ENCODE measurements at regions of chr17 and their contacts with region 1.

Region 1: DNA sequence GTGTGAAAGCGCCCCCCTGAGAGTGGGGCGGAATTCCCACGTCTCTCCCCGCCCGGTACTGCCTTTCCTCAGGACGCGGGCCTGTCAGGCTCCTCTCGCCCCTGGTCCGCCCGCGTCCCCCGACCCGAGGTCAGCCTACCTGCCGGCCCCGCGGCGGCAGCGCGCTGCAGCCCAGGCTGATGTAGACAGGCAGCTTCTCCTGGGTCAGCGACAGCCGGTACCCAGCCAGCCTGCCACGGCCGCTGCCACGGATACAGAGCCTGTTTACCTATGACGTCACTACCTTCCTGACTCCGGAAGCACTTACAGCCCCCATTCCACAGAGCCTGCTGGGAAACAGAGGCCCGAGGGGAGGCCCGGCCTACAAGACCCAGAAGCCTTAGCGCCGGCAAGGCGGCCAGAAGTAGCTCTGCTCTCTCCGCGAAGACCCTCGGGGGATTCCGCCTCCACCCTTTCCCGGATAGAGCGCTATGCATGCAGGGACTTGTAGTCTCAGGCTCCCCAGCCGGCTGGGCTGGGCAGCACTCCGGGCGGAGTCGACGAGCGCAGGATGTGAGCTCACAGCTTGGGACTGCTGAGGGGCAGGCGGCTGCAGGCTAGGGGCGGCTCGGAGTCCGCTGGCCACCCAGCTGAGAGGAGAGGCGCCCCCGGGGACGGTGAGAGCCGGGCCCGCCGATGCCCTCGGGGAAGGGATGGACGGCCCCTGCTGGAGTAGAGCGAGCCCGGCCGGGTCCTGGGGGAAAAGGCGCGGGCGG is at the starts of genes IFT20 and TNFAIP1:
- DNase-seq: peak; percentile 99
- H3K4me3 ChIP-seq: peak within 1 kb of the TSS; percentile 94
- H3K27me3 ChIP-seq: no peaks in the 10 kb centered on the region
- CTCF ChIP-seq: no peak
- polyA plus RNA-seq, gene IFT20: 39.1 and 53.2 TPM in 2 replicates
- polyA plus RNA-seq, gene TNFAIP1: 80.7 and 166 TPM in 2 replicates

Region 2: GRCh38 chr17:27805520-27806146 is 529.7 kb before region 1 on chr17:
- CTCF ChIA-PET with region 1: interaction called, 12 read pairs
- POLR2A ChIA-PET with region 1: no interaction called
- DNase-seq: peak; percentile 21
- H3K4me3 ChIP-seq: 0 out of 2 replicates have a peak overlapping the region, but pooled peaks have one; percentile 10
- H3K27me3 ChIP-seq: no peaks in the 10 kb centered on the region
- CTCF ChIP-seq: peak; percentile 84

Region 3: DNA sequence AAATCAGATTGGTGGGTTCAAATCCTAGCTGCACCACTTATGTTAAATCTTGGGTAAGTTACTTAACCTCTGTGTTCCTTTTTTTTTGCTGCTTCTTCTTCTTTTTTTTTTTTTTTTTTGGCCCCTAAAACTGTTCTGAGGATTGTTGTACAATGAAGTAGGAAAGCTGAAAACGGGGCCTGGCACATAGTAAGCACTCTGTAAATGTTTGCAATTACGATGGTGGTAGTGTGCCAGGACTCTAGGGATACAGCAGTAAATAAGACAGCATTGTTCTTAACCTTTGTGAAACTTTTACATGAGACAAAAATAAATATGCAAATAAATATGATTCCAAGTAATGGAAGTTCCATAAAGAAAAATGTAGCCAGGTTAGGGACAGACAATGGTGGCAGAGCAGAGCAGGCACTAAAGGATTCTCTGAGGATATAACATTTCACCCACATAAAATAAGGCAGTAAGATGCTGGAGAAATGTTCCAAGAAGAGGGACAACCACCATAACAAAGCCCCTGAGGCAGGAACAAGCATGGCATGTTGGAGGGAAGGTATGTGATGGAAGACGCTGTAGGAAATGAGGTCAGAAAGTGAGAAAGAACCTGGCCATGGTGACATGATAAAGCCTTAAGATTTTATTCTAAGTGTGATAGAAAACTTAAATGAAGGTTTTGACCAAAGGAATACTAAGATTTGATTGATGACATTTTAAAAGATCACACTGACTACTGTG is 165.6 kb before region 1 on chr17:
- CTCF ChIA-PET with region 1: no interaction called
- POLR2A ChIA-PET with region 1: interaction called, 11 read pairs
- DNase-seq: no peak
- H3K4me3 ChIP-seq: no peak overlapping the region
- H3K27me3 ChIP-seq: no peaks in the 10 kb centered on the region
- CTCF ChIP-seq: no peak

Region 4: GRCh38 chr17:28346746-28347246 is 11.4 kb after region 1 on chr17:
- CTCF ChIA-PET with region 1: interaction called, 13 read pairs
- POLR2A ChIA-PET with region 1: interaction called, 9 read pairs
- DNase-seq: no peak
- H3K4me3 ChIP-seq: no peak overlapping the region
- H3K27me3 ChIP-seq: no peaks in the 10 kb centered on the region
- CTCF ChIP-seq: peak; percentile 48

Region 5: GRCh38 chr17:28552246-28552999 is 217.0 kb after region 1 on chr17 and contains the start of gene UNC119:
- CTCF ChIA-PET with region 1: no interaction called
- POLR2A ChIA-PET with region 1: no interaction called
- DNase-seq: no peak
- H3K4me3 ChIP-seq: peak within 1 kb of the TSS; percentile 55
- H3K27me3 ChIP-seq: no peaks in the 10 kb centered on the region
- CTCF ChIP-seq: no peak
- polyA plus RNA-seq, gene UNC119: 82.8 and 150 TPM in 2 replicates

Measured in BJ (cell line).